ENCODE measurements at regions of chr12 and their contacts with region 1.

Region 1: GRCh38 chr12:108731105-108731865 is at the start of gene CORO1C:
- DNase-seq: peak; percentile 99
- H3K4me3 ChIP-seq: peak within 1 kb of the TSS; percentile 71 to 96 (median 86)
- H3K27ac ChIP-seq: peak within 1 kb of the TSS; percentile 98 to 99 (median 98)
- H3K4me1 ChIP-seq: peaks cover 10 to 71% (median 44%) of the 10 kb centered on the region in 4 donors
- H3K27me3 ChIP-seq: no peaks in the 10 kb centered on the region
- CTCF ChIP-seq: peak; percentile 70 to 96 (median 90)
- EP300 ChIP-seq: no peak
- POLR2A ChIP-seq: peak; percentile 81
- total RNA-seq, gene CORO1C: 68.1 to 153 (median 128) TPM

Region 2: DNA sequence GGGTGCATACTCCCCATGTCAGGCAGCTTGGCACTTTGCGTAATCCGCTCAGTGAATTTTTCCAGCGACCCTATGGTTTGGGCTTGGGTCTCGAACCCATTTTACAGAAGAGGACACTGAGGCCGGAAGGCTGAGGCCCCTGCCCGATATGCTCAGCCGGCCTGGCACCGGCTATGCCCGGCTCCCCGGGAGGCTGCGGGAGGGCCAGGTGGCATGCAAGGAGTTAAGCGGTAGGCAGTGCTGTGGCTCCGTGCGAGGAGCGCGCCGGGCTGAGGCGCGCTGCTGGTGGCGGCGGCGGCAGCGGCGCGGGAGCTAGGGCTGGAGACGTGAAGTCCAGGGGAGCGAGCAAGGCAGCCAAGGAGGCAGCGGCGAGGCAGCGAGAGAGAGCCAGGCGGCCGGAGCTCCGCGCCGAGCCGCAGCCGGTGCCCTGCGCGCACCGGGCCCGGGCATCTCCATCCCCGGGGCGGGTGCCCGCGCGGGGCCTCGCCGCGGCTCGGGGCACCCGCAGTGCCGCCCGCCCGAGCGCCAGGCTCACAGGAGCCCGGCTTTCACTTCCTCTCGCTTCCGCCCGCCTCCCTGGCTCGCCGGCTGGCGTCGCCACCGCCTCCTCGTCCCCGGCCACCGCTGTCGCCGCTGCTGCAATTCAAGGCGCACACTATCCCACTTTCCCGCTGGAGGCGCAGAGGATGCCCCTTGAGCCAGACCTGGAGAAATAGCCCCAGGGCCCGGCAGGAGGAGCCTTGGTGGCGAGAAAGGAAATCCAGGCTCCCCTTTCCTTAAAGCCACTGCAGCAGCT is 602.1 kb before region 1 on chr12 and contains the start of gene WSCD2:
- in situ Hi-C with region 1: no loop called
- intact Hi-C with region 1: no loop called
- DNase-seq: peak; percentile 21
- H3K4me3 ChIP-seq: peak within 1 kb of the TSS; percentile 32 to 47 (median 38)
- H3K27ac ChIP-seq: peak within 1 kb of the TSS; percentile 39 to 82 (median 72)
- H3K4me1 ChIP-seq: peaks cover 0 to 14% (median 9%) of the 10 kb centered on the region in 4 donors
- H3K27me3 ChIP-seq: peaks cover 39% of the 10 kb centered on the region
- CTCF ChIP-seq: peak in 3 of 5 experiments; percentile 9 to 16 (median 16)
- EP300 ChIP-seq: no peak
- POLR2A ChIP-seq: no peak
- total RNA-seq, gene WSCD2: 0.16 to 46.6 (median 1.1) TPM in 3 of 4 donors, not detected in the other

Region 3: GRCh38 chr12:108526482-108527165 is 204.7 kb before region 1 on chr12:
- in situ Hi-C with region 1: no loop called
- intact Hi-C with region 1: no loop called
- DNase-seq: no peak
- H3K4me3 ChIP-seq: no peak overlapping the region
- H3K27ac ChIP-seq: no peak overlapping the region
- H3K4me1 ChIP-seq: no peaks in the 10 kb centered on the region
- H3K27me3 ChIP-seq: no peaks in the 10 kb centered on the region
- CTCF ChIP-seq: no peak
- EP300 ChIP-seq: no peak
- POLR2A ChIP-seq: no peak

Region 4: DNA sequence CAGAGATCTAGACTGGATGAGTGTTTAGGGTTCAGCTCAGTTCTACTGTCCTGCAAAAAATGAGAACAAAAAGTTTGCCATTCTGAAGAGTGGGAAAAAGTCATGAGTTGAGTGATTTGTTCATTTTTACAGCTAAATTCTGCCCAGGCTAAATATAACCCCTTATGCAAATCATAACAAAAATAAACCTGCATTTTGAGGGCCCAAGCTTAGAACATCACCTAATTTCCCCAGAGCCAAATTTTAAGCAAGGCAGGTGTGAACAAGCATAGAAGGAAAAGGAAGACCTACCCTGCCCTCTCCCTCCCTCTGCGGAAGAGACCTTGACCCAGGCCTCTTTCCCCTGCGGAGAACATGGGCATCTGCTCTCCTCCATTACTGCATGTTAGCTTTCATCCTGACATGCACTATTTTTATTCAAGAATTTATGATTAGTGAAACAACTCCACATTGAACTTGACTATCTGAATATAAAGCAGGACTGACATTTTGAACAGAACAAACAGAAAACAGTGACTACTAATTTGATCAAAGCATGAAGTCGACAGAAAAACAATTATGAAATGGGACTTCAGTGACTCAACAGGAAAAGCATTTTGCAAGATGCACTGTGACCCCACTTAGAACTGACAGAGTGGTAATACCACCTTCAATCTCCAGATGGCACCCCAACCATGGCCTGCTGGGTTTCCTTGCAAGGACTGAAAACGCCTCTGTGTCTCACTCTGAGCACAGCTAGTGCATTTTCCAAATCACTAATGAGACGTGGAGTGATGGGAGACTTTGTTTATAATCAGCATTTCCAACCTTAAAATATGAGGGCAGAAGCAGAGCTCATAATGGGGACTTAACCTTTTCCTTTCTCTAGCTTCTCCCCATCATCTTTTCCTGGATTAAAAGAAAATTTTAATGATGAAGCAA is 66.7 kb before region 1 on chr12:
- in situ Hi-C with region 1: no loop called
- intact Hi-C with region 1: loop called (anchors 1 kb)
- DNase-seq: peak; percentile 89
- H3K4me3 ChIP-seq: no peak overlapping the region
- H3K27ac ChIP-seq: peak overlapping the region; percentile 82 to 93 (median 88)
- H3K4me1 ChIP-seq: peaks cover 26 to 62% (median 50%) of the 10 kb centered on the region in 4 donors
- H3K27me3 ChIP-seq: no peaks in the 10 kb centered on the region
- CTCF ChIP-seq: peak; percentile 82 to 98 (median 90)
- EP300 ChIP-seq: no peak
- POLR2A ChIP-seq: no peak

Region 5: GRCh38 chr12:108750526-108751402 is 19.5 kb after region 1 on chr12:
- in situ Hi-C with region 1: no loop called
- intact Hi-C with region 1: no loop called
- DNase-seq: no peak
- H3K4me3 ChIP-seq: no peak overlapping the region
- H3K27ac ChIP-seq: peak overlapping the region; percentile 37 to 73 (median 53)
- H3K4me1 ChIP-seq: peaks cover 4 to 30% (median 14%) of the 10 kb centered on the region in 4 donors
- H3K27me3 ChIP-seq: no peaks in the 10 kb centered on the region
- CTCF ChIP-seq: no peak
- EP300 ChIP-seq: no peak
- POLR2A ChIP-seq: no peak

Region 6: DNA sequence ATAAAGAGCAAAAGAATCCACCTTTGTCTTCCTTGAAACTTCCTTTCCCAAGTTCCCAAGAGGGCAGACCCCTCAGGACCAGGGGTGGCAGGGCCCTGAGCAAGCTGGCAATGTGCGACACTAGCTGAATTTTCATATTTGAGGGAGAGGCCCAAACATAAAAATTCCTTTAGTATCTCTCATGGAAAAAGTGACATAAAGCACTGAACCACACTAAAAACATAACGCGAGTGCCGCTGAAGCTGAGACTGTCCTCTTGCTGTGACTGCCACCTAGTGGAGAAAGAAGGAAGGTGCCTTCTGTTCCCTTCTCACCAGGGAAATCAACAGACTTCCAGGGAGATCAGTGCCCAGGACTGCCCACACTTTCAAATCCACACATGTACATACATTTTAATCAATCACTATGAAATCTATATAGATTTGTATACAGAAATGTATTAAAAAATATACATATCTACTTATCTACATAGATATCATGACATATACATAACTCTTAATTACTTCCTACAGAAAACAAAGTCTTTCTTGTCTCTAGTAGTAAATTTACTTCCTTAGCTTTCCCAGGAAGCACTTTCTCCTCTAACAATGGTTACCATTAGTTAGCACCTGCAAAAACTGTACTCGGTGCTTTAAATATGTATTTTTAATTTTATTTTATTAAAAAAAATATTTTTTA is 72.3 kb after region 1 on chr12:
- in situ Hi-C with region 1: no loop called
- intact Hi-C with region 1: loop called (anchors 2 kb)
- DNase-seq: peak; percentile 82
- H3K4me3 ChIP-seq: no peak overlapping the region
- H3K27ac ChIP-seq: peak overlapping the region; percentile 80 to 93 (median 88)
- H3K4me1 ChIP-seq: peaks cover 15 to 63% (median 37%) of the 10 kb centered on the region in 4 donors
- H3K27me3 ChIP-seq: no peaks in the 10 kb centered on the region
- CTCF ChIP-seq: peak; percentile 92 to 97 (median 96)
- EP300 ChIP-seq: peak; percentile 38
- POLR2A ChIP-seq: no peak

Region 7: DNA sequence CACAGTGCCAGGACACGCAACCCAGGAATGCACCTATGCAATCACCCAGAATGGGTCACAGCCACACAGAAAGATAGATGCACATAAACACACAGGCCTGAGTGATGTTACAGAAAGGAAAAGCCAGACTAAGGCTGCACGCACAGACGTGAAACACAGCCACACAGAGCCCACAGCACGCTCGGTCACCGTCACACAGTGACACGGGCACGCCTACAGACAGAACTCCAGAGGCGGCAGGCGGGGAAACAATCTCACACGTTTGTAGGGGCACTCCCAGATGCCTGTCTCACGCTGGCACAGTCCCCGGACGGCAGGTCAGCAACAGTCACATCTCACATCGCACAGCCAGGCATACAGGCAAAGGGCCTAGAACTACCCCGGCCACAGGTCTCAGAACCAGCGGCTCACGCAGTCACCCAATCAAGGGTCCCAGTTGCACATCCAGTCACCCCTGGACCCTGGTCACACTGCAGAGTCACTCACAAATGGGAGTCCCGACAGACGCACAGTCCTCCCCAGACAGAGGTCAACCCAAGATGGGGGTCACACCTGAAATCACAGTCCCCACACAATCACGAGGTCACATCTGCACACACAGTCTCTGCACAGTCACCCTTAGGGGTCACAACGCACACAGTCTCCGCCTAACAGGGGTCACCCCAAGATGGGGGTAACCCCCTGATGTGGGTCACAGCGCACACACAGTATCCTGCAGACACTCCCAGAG is 125.3 kb after region 1 on chr12:
- in situ Hi-C with region 1: no loop called
- intact Hi-C with region 1: loop called (anchors 5 kb)
- DNase-seq: peak; percentile 81
- H3K4me3 ChIP-seq: peak overlapping the region; percentile 62 to 85 (median 68)
- H3K27ac ChIP-seq: peak overlapping the region; percentile 87 to 94 (median 93)
- H3K4me1 ChIP-seq: peaks cover 8 to 64% (median 42%) of the 10 kb centered on the region in 4 donors
- H3K27me3 ChIP-seq: no peaks in the 10 kb centered on the region
- CTCF ChIP-seq: peak in 1 of 5 experiments; percentile 10
- EP300 ChIP-seq: no peak
- POLR2A ChIP-seq: peak; percentile 74

Region 8: DNA sequence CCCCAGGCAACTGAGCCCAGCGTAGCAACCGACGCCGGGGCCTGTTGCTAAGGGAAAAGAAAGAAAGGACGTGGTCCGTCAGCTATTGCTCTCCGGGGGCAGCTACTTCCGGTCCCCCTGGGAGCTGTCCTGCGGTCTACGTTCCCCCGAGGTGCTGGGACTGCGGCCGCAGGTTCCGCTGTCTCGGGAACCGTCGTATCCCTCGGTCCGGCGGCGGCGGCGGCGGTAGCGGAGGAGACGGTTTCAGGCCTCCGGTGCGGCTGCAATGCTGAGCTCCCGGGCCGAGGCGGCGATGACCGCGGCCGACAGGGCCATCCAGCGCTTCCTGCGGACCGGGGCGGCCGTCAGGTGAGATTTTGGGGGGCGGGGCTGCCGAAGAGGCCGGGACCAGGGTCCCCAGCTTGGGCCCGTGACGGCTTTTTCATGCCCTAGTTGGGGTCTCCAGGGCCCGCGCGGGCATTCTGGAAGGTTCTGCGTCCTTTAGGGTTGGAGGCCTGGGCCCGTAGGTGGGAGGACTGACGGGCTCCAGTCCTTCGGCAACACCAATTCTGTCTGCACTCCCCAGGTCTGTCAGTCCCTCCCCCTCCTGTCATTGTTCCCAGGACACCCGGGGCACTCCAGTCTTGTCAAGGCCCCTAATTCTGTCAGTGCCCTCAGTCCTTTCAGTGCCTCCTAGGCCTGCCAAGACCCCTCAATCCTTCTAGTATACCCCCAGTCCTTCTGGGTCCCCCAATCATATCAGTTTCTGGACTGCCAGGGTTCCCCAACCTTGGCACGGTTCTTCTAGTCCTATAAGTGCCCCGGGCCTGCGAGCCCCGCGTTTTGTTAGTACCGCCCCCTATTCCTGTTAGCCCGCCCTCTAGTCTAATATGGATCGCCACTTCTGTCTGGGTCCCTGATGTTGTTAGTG is 321.4 kb after region 1 on chr12 and contains the start of gene USP30:
- in situ Hi-C with region 1: no loop called
- intact Hi-C with region 1: loop called (anchors 2 kb)
- DNase-seq: peak; percentile 89
- H3K4me3 ChIP-seq: peak within 1 kb of the TSS; percentile 76 to 100 (median 88)
- H3K27ac ChIP-seq: peak within 1 kb of the TSS; percentile 90 to 96 (median 92)
- H3K4me1 ChIP-seq: peaks cover 14 to 36% (median 17%) of the 10 kb centered on the region in 4 donors
- H3K27me3 ChIP-seq: no peaks in the 10 kb centered on the region
- CTCF ChIP-seq: no peak
- EP300 ChIP-seq: no peak
- POLR2A ChIP-seq: peak; percentile 58
- total RNA-seq, gene USP30: 6.8 to 38.9 (median 24.9) TPM